Posterior cingulate gyrus (tissue), 11 donors: ENCODE measurements at regions of chr4 and their contacts with region 1.

Region 1: GRCh38 chr4:123127218-123127617 is 204.8 kb upstream of the NUDT6 start:
- DNase-seq: no peak

Region 2: GRCh38 chr4:123068081-123068480 is 59.1 kb before region 1 on chr4:
- intact Hi-C with region 1: no loop called
- DNase-seq: no peak

Region 3: DNA sequence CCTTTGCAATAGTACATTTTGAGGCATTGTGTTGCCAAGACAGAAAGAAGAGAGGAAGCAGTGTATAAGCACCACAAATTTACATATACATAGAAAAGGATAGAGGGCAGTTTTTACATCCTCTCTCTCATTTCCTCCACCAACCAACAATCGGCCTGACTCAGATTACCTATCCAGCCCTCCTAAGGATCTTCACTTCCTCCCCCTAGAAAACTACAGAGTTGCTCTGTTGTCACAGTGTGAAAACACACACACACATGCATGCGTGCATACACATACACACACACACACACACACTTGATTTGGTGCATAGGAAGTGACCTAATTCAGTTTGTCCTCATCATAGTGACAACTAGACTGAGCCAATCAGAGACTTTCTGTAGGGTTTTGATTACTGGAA is 170.6 kb after region 1 on chr4:
- intact Hi-C with region 1: no loop called
- DNase-seq: no peak

Region 4: DNA sequence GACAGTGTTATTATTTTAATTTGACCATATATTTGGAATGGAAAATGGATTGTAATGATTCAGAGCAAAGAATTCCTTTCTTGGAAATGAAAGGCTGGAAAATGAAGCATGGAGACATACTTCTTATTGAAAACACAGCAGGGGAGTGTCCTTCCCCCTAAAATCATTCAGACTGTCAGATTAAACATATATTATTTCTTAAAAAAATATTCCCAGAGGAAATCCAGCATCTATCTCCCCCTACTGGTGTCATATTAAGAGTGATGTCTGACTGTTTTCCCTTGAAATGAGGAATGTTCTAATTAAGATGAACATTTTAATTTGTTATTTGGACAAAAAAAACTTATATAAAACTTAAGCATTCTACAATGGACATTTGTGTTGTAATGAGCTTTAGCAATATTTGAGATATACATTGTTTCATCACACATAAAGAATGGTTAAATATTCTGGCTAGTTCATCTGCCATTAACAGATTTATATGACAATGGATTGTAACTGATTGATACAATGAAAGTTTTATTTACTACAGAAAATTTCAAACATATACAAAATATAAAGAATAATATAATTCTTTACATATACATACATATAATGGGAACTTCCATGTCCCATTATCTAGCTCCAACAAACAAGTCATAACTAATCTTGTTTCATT is 534.0 kb after region 1 on chr4:
- intact Hi-C with region 1: loop called (anchors 5 kb)
- DNase-seq: no peak

Region 5: DNA sequence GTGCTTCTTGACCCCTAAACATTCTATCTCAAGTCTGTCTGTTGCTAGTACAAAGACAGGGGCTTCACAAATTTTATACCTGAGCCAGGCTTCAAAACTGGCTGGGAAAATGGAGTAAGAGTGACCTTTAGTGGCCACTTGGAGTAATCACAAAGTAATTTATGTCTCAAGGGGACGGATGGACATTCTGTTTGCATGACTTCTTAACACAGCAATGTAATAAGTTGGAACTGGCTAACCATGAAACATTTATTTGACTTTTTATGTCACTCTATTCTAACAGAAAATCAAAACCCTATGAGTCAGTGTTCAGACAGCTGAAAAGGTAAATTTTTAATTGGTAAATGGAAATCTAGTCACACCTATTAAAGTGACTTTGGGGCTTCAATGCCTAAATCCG is 984.7 kb after region 1 on chr4:
- intact Hi-C with region 1: loop called (anchors 10 kb)
- DNase-seq: no peak

Region 6: DNA sequence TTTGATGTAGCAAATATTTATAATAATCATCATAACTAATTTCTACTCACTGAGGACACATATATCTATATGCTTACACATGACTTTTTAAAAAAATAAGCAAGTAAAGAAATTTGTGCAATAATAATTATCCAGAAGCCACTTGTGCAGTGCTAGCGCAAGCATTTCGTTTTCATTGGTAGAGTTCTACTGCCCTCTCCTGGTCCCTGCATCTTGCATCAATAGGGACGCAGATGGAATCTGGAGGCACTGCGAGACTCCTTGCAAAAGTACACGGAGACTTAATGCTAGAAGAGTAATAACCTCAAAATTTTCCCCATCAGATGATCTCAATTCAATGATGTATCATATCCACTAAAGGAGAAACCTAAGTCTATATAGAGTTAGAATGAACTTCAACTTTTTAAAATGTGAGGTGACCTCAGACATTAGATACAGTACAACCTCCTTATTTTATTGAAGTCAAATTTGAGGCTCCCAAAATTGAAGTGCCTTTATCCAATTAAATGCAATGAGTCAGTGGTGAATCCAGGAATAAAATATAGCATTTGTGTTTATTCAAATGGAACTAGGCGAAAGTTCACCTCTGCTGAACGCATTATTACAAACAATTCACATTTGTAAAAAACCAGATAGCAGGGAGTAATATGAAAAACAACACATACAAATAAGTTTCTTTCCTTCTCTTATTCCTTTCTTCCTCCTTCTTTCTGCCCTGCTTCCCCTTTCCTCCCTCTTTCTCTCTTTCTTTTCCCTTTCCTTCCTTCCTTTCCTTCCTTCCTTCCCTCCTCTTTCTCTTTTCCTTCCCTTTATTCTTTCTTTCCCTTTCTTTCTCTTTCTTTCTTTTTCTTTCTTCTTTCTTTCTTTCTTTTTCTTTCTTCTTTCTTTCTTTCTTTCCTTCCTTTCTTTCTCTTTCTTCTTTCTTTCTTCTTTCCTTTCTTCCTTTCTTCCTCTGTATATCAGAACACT is 1135.3 kb after region 1 on chr4:
- intact Hi-C with region 1: loop called (anchors 5 kb)
- DNase-seq: peak in 9 of 10 donors; percentile 12 to 85 (median 47)